Activated T-helper 1 cell treated with anti-CD3 and anti-CD28 coated beads, Interleukin-12 subunit alpha, Interleukin-12 subunit beta, Interleukin-2, Interleukin-4 antibody, amounts not matched to agents 30 ng/mL and 10 ng/mL and 1 ng/mL, durations not matched to agents 14 hours and 24 hours and 36 hours (primary cell): ENCODE measurements at regions of chr10 and their contacts with region 1.

Region 1: GRCh38 chr10:71974489-71975021 is 10.4 kb downstream of the CHST3 start:
- DNase-seq: no peak
- H3K4me3 Mint-ChIP-seq: no peak overlapping the region
- H3K27ac Mint-ChIP-seq: no peak overlapping the region
- H3K4me1 Mint-ChIP-seq: peaks cover 13% of the 10 kb centered on the region
- H3K27me3 Mint-ChIP-seq: no peaks in the 10 kb centered on the region

Region 2: GRCh38 chr10:71899665-71900412 is 74.7 kb before region 1 on chr10:
- intact Hi-C with region 1: loop called (anchors 5 kb)
- DNase-seq: no peak
- H3K4me3 Mint-ChIP-seq: no peak overlapping the region
- H3K27ac Mint-ChIP-seq: no peak overlapping the region
- H3K4me1 Mint-ChIP-seq: peaks cover 4% of the 10 kb centered on the region
- H3K27me3 Mint-ChIP-seq: peaks cover 3% of the 10 kb centered on the region

Region 3: GRCh38 chr10:71933651-71934050 is 40.9 kb before region 1 on chr10:
- intact Hi-C with region 1: no loop called
- DNase-seq: peak; percentile 37
- H3K4me3 Mint-ChIP-seq: peak overlapping the region; percentile 32
- H3K27ac Mint-ChIP-seq: peak overlapping the region; percentile 66
- H3K4me1 Mint-ChIP-seq: peaks cover 17% of the 10 kb centered on the region
- H3K27me3 Mint-ChIP-seq: peaks cover 13% of the 10 kb centered on the region